ENCODE measurements at regions of chr1 and their contacts with region 1.

Region 1: GRCh38 chr1:40338745-40339424 is 21.8 kb upstream of the COL9A2 start:
- DNase-seq: peak; percentile 87
- ATAC-seq: peak; percentile 93
- H3K4me3 Mint-ChIP-seq: peak overlapping the region; percentile 36
- H3K27ac Mint-ChIP-seq: peak overlapping the region; percentile 64
- H3K4me1 Mint-ChIP-seq: peaks cover 40% of the 10 kb centered on the region
- H3K27me3 Mint-ChIP-seq: no peaks in the 10 kb centered on the region
- CTCF ChIP-seq: peak; percentile 96

Region 2: DNA sequence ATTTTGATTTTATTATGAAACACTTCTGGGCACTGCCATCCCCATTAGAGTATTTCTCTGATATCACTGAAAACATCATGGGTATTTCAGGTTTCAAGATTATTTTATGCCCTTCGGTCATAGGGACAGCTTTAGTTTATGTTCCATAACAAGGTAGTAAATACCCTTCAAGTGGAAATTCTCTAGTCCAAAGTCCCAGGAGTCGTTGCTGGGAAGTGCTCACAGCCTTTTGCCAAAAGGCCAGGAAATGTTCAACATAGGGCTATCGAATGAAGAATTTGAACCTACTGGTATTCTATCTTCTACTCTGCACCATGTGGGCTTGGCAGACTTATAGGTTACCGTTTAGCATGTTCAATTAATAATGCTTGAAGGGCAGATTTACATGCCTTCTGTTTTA is 391.6 kb before region 1 on chr1:
- CTCF ChIA-PET with region 1: no interaction called
- POLR2A ChIA-PET with region 1: interaction called, 10 read pairs
- intact Hi-C with region 1: no loop called
- DNase-seq: no peak
- ATAC-seq: no peak
- H3K4me3 Mint-ChIP-seq: no peak overlapping the region
- H3K27ac Mint-ChIP-seq: no peak overlapping the region
- H3K4me1 Mint-ChIP-seq: peaks cover 12% of the 10 kb centered on the region
- H3K27me3 Mint-ChIP-seq: no peaks in the 10 kb centered on the region
- CTCF ChIP-seq: no peak

Region 3: DNA sequence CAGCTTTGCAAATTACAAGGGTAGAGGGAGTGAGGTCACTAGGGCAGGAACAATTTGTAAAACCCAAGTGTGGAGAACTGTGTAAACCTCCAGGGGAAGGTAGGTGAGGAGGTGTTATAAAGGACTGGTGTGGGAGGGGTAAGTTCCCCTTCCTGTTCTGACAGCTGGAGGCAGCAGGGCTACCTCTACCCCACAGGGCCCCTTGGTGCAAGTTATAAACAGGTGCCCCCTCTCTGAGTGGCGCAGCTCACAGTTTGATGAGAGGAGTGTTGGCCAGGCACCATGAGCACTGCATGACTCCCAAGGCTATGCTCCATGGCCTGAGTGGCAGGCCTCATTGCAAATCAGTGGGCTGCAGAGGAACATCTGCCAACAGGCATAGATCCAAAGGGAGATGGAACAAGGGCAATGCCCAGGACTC is 342.9 kb before region 1 on chr1:
- CTCF ChIA-PET with region 1: no interaction called
- POLR2A ChIA-PET with region 1: no interaction called
- intact Hi-C with region 1: no loop called
- DNase-seq: no peak
- ATAC-seq: peak; percentile 96
- H3K4me3 Mint-ChIP-seq: peak overlapping the region; percentile 1
- H3K27ac Mint-ChIP-seq: peak overlapping the region; percentile 77
- H3K4me1 Mint-ChIP-seq: peaks cover 27% of the 10 kb centered on the region
- H3K27me3 Mint-ChIP-seq: no peaks in the 10 kb centered on the region
- CTCF ChIP-seq: no peak

Region 4: DNA sequence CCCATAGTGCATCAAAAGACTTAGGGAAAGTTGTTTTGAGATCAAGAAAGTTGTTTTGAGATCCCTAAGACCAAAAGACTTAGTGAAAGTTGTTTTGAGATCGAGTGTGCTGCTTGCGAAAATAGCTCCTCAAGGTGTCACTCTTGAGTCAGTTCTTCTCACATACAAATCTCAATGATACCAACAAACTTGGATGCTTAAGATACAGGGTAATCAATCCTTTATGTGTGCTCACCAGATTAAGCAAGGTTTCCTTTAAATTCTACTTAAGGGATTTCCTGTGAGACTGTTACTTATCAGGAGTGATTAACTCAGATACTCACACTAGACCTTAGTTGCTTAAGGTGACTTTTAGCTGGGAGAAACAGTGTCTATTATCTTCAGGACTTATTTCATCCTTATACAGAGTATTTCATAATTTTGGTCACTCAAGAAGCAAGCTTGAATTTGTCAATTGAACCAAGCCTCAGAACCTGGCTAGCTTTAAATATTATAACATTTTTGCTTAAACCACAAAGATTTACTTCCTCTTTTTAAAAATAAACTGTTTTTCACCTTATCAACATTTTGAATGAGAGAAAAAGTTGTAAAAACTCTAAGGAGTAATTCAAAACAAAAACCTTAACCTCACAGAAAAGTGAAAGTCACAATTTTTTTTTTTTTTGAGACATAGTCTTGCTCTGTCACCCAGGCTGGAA is 185.7 kb before region 1 on chr1:
- CTCF ChIA-PET with region 1: interaction called, 151 read pairs
- POLR2A ChIA-PET with region 1: interaction called, 27 read pairs
- intact Hi-C with region 1: loop called (anchors 1 kb)
- DNase-seq: no peak
- ATAC-seq: peak; percentile 77
- H3K4me3 Mint-ChIP-seq: peak overlapping the region; percentile 74
- H3K27ac Mint-ChIP-seq: peak overlapping the region; percentile 90
- H3K4me1 Mint-ChIP-seq: peaks cover 27% of the 10 kb centered on the region
- H3K27me3 Mint-ChIP-seq: no peaks in the 10 kb centered on the region
- CTCF ChIP-seq: no peak

Region 5: GRCh38 chr1:40315239-40315794 is 23.6 kb before region 1 on chr1:
- CTCF ChIA-PET with region 1: interaction called, 67 read pairs
- POLR2A ChIA-PET with region 1: interaction called, 14 read pairs
- intact Hi-C with region 1: loop called (anchors 1 kb)
- DNase-seq: peak; percentile 84
- ATAC-seq: peak; percentile 61
- H3K4me3 Mint-ChIP-seq: peak overlapping the region; percentile 85
- H3K27ac Mint-ChIP-seq: peak overlapping the region; percentile 51
- H3K4me1 Mint-ChIP-seq: peaks cover 53% of the 10 kb centered on the region
- H3K27me3 Mint-ChIP-seq: peaks cover 7% of the 10 kb centered on the region
- CTCF ChIP-seq: no peak

Region 6: DNA sequence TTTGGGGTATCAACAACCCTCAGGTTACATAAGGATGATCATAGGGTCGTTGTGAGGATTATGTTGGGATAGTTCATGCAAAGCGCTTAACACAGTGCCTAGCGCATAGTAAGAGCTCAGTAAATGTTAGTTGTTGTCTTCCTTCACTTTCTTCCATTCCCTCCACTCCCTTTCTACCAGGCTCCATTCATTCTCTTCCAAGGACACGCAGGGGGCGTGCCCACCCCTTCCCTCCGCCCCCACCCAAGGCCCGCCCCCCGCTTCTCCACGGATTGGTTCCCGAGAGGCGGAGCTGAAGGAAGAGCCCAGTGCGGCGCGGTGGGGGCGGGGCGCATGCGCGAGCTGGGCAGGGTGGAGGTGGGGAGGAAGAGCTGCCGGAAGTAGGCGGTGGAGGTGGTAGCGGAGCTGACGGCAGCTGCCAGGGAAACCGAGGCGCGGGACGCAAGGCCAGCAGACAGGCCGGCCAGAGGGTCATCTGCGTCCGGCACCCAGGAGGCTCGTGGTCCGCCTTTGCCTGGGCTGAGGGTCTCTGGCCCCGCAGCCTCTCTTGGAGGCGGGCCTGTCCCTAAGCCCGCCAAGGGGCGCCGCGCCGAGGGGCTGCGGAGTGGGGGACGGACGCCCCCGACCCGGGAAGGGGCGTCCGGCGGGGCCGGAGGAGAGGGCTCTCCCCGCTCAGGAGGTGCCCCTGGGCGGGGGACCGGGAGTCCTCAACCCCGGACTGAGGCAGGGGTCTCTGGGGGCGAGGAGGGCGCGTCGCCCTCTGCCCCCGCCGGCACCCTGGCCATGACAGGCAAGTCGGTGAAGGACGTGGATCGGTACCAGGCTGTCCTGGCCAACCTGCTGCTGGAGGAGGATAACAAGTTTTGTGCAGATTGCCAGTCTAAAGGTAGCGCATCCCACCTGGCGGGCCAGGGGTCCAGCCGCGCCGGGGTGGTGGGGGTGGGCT is 34.7 kb after region 1 on chr1 and contains the start of gene SMAP2:
- CTCF ChIA-PET with region 1: interaction called, 25 read pairs
- POLR2A ChIA-PET with region 1: interaction called, 76 read pairs
- intact Hi-C with region 1: no loop called
- DNase-seq: peak; percentile 91
- ATAC-seq: peak; percentile 88
- H3K4me3 Mint-ChIP-seq: peak within 1 kb of the TSS; percentile 97
- H3K27ac Mint-ChIP-seq: peak within 1 kb of the TSS; percentile 96
- H3K4me1 Mint-ChIP-seq: peaks cover 52% of the 10 kb centered on the region
- H3K27me3 Mint-ChIP-seq: no peaks in the 10 kb centered on the region
- CTCF ChIP-seq: no peak
- total RNA-seq, gene SMAP2: 202 and 220 TPM in 2 replicates

Region 7: GRCh38 chr1:40397258-40397657 is 58.4 kb after region 1 on chr1:
- CTCF ChIA-PET with region 1: interaction called, 20 read pairs
- POLR2A ChIA-PET with region 1: interaction called, 24 read pairs
- intact Hi-C with region 1: loop called (anchors 1 kb)
- DNase-seq: no peak
- ATAC-seq: no peak
- H3K4me3 Mint-ChIP-seq: peak overlapping the region; percentile 44
- H3K27ac Mint-ChIP-seq: peak overlapping the region; percentile 90
- H3K4me1 Mint-ChIP-seq: peaks cover 97% of the 10 kb centered on the region
- H3K27me3 Mint-ChIP-seq: no peaks in the 10 kb centered on the region
- CTCF ChIP-seq: no peak

Region 8: GRCh38 chr1:40849801-40850592 is 511.1 kb after region 1 on chr1:
- CTCF ChIA-PET with region 1: no interaction called
- POLR2A ChIA-PET with region 1: no interaction called
- intact Hi-C with region 1: loop called (anchors 2 kb)
- DNase-seq: peak; percentile 67
- ATAC-seq: peak; percentile 97
- H3K4me3 Mint-ChIP-seq: no peak overlapping the region
- H3K27ac Mint-ChIP-seq: no peak overlapping the region
- H3K4me1 Mint-ChIP-seq: peaks cover 10% of the 10 kb centered on the region
- H3K27me3 Mint-ChIP-seq: no peaks in the 10 kb centered on the region
- CTCF ChIP-seq: peak; percentile 46

Measured in activated B cell treated with CpG ODN at 0.5 μM for 24 hours (primary cell).